ENCODE measurements at regions of chrX and their contacts with region 1.

Region 1: GRCh38 chrX:75603833-75604232 is 81.0 kb upstream of the ZDHHC15 start:
- DNase-seq: no peak
- H3K4me3 Mint-ChIP-seq: no peak overlapping the region
- H3K27ac Mint-ChIP-seq: no peak overlapping the region
- H3K4me1 Mint-ChIP-seq: no peaks in the 10 kb centered on the region
- H3K27me3 Mint-ChIP-seq: no peaks in the 10 kb centered on the region

Region 2: DNA sequence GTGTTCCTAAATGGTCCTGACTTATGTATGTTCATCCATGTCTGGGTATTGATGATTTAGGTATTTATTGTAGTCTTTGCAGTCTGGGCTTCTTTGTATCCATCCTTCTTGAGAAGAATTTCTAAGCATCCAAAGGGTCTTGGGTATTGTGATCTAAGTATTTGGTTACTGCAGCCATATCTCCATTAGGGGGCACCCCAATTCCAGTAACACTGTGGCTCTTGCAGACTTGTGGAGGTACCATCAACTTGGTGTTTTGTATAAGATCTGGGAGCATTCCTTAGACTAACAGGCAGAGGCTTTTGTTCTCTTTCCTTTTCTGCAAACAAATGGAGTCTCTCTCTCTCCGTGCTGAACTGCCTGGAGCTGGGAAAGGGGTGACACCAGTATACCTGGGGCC is 564.9 kb before region 1 on chrX:
- intact Hi-C with region 1: loop called (anchors 1 kb)
- DNase-seq: no peak
- H3K4me3 Mint-ChIP-seq: no peak overlapping the region
- H3K27ac Mint-ChIP-seq: no peak overlapping the region
- H3K4me1 Mint-ChIP-seq: no peaks in the 10 kb centered on the region
- H3K27me3 Mint-ChIP-seq: no peaks in the 10 kb centered on the region